ENCODE measurements at regions of chr2 and their contacts with region 1.

Region 1: DNA sequence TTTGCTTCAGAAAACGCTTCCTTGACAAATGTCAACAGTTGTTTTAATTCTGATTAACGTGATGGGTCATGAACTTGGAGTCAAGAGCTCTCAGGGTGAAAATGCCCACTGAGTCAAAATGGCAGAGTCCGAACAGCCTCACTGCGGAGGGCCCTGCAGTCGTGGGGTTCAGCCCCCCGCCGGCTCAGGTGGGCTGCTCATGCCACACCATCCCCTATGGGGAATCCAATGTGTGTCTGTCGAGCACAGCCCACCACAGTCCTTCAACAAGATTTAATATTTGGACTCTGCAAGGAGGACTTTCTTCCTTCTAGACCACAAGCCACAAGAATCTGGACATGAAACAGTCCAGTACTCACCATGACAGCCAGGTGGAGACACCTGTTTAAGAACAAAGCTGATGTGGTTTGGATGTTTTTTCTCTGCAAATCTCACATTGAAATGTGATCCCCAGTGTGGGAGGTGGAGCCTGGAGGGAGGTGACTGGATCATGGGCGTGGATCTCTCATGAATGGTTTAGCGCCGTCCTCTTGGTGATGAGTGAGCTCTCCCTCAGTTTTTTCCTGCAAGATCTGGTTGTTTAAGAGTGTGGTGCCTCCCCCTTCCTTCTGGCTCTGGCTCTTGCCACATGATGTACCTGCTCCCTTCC is 201.0 kb downstream of the NDUFA10 start:
- DNase-seq: peak; percentile 45
- H3K4me3 ChIP-seq: no peak overlapping the region
- H3K27ac ChIP-seq: no peak overlapping the region
- H3K4me1 ChIP-seq: no peaks in the 10 kb centered on the region
- H3K27me3 ChIP-seq: no peaks in the 10 kb centered on the region
- CTCF ChIP-seq: no peak

Region 2: DNA sequence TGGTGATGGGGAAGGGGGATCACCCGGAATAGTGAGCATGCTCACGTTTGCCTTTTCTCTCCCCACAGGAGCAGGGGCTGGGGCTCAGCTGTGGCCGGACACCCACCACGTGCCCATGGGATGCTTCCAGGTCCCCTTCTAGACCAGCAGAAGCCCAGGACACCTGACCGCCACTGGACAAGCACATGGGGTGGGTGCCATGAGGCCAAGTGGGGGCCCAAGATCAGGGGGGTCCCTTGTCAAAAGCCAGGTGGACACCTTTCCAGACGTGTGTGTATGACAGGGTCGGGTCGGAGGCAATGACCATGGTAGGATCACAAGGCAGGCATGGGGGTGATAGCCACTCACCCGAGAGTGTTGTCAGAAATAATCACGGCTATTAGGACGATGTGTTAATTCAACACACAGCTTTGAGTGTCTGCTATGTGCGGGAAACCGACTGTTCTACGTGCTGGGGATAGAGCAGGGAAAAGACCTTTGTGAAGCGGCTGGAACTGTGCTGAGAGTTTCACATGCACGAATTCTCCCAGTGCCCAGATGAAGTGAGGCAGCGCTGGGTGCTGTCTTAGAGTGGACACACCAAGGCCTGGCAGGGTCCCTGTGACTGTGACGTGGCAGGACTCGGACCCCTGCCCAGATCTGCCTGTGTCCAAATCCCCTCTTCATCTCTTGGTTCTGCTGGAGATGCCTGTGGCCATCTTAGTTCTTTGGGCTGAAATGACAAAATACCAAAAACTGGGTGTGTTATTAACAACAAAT is 43.8 kb before region 1 on chr2:
- CTCF ChIA-PET with region 1: no interaction called
- POLR2A ChIA-PET with region 1: no interaction called
- intact Hi-C with region 1: no loop called
- DNase-seq: no peak
- H3K4me3 ChIP-seq: no peak overlapping the region
- H3K27ac ChIP-seq: no peak overlapping the region
- H3K4me1 ChIP-seq: peaks cover 4% of the 10 kb centered on the region
- H3K27me3 ChIP-seq: peaks cover 19% of the 10 kb centered on the region
- CTCF ChIP-seq: no peak

Region 3: GRCh38 chr2:239862613-239863012 is 38.4 kb after region 1 on chr2:
- CTCF ChIA-PET with region 1: no interaction called
- POLR2A ChIA-PET with region 1: no interaction called
- intact Hi-C with region 1: loop called (anchors 2 kb)
- DNase-seq: no peak
- H3K4me3 ChIP-seq: no peak overlapping the region
- H3K27ac ChIP-seq: no peak overlapping the region
- H3K4me1 ChIP-seq: no peaks in the 10 kb centered on the region
- H3K27me3 ChIP-seq: peaks cover 11% of the 10 kb centered on the region
- CTCF ChIP-seq: no peak